Astrocyte of the cerebellum (primary cell): ENCODE measurements at regions of chr11 and their contacts with region 1.

Region 1: GRCh38 chr11:110715541-110715940 is 3.3 kb upstream of the ARHGAP20 start:
- DNase-seq: no peak
- H3K4me3 ChIP-seq: no peak overlapping the region
- CTCF ChIP-seq: no peak

Region 2: DNA sequence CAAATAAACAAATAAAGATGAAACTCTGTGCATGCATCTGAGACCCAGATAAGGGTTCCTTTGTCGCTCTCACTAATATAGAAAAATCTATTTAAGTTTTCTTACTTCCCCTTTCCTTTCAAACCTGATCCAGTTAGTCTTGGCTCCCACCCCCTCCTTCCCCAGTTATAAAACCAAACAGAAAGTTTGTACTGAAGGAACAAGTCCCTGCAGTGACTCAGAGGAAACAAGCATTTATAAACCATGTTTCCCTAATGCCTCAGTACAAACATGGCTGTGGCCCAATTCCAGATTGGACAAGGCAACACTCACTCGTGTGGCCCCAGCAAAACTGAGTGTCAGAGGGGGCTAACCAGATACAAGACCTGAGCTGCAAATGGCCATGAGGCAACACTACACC is 62.2 kb after region 1 on chr11:
- in situ Hi-C with region 1: loop called (anchors 5 kb)
- DNase-seq: peak; percentile 27
- H3K4me3 ChIP-seq: no peak overlapping the region
- CTCF ChIP-seq: no peak